ENCODE measurements at regions of chr3 and their contacts with region 1.

Region 1: DNA sequence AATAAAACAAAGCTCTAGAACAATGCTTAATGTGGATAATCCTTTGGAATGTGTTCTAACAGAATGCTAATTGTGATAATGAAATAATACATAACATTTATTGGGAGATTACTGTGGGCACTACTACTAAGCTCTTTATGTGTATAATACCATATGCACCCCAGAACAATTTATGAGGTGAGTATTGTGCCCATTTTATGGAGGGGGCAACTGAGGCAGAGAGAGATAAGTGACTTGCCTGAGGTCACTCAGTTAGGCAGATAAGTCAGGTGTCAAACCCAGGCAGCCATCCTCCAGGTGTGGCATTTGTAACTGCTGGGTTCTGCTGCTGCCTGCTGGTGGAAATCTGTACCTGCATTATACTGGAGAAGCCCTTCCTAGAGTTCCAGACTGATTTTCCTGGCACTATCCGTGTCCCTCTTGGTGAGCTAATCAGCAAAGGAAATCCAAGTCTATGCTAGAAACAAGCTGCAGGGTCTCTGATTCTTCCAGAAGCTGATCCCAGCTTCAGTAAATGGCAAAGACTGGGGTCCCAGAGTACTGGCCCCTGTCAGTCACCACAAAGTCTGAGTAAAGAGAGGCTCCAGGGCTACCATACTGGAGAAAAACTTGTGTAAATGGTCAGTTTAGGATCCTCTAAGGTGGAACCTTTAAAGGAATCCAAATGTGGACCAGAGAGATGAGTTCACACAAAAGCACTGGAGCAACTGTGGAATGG is 22.6 kb upstream of the RBP1 start:
- H3K4me3 ChIP-seq: no peak overlapping the region
- H3K27ac ChIP-seq: no peak overlapping the region
- H3K4me1 ChIP-seq: no peaks in the 10 kb centered on the region
- CTCF ChIP-seq: peak; percentile 49; the same call in 1 of the 2 replicates

Region 2: DNA sequence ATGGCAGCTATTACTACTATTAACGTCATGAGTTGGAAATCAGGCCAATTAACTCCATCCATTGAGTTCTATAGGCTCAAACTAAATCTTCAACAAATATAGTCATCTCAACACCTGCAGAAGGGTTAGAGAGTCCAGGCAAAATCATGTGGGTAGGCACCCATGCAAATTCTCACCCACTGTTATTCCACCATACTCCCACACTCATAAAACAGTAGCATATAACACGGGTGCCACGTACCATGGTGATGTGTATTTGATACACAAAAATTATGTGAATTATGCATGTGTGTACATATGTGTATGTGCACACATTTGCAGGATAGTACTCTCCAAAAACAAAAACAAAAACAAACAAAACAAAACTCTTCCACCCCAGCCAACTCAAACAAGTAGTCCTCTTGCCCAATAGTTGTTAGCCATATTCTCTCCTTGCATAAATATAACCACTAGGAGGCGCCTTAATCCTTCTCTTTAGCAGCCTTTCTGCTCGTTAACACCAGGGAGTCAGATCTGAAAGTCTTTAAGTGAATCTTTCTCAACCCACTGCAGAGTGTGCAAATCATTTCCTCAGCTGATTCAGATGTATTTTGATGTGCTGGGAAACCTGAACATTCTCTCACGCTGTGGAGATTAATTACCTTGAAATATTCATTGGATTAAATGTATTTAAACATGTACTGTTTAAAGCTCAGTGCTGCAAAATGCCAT is 134.7 kb before region 1 on chr3:
- CTCF ChIA-PET with region 1: interaction called, 89 read pairs
- POLR2A ChIA-PET with region 1: no interaction called
- H3K4me3 ChIP-seq: no peak overlapping the region
- H3K27ac ChIP-seq: no peak overlapping the region
- H3K4me1 ChIP-seq: no peaks in the 10 kb centered on the region
- CTCF ChIP-seq: peak; percentile 59; the same call in 1 of the 2 replicates

Region 3: DNA sequence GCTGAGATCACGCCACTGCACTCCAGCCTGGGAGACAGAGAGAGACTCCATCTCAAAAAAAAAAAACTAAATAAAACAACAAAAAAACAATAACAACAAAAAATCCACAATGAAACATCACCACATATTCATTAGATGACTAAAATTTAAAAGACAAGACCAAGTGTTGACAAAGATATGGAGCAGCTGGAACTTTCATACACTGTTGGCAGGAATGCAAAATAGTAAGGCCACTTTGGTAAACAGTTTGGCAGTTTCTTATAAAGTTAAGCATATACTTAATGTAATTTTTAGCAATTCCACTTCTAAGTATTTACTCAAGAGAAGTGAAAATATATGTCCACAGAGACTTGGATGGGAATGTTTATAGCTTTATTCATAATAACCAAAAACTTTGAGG is 129.0 kb before region 1 on chr3:
- CTCF ChIA-PET with region 1: interaction called, 89 read pairs
- POLR2A ChIA-PET with region 1: no interaction called
- H3K4me3 ChIP-seq: no peak overlapping the region
- H3K27ac ChIP-seq: no peak overlapping the region
- H3K4me1 ChIP-seq: no peaks in the 10 kb centered on the region
- CTCF ChIP-seq: no peak

Region 4: DNA sequence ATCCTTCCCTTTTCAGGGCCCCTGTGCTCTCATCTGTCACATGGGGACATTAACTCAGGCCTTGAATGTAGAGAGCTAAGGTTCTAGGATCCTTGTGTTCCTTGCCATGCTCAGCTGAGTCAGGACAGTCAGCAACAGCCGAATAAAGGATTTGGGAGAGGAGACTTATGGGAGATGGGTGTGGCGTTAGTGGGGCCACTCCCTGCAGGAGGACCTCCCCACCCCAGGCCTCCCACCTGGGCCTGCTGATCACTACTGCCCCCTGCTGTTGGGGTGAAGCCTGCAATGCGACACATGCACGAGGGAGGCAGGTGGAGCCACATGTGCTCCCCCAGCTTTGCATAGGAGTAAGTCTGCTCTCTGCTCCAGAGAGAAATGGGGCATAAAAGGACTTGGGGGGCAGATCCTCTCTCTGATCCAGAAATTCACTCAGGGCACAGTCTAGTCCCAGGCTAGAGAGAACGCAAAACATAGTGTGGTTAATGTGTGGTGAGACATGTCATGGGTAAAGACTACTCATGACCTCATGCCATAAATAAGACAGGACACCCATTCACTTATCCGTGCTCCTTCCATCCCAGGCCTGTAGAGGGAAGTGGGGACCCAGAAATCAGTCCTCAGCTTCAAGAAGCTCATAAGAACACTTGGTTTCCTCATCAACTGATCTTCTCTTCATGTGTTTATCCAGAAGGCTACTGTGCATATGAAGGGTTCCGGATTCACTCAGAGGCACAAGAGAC is 42.0 kb before region 1 on chr3:
- CTCF ChIA-PET with region 1: interaction called, 12 read pairs
- POLR2A ChIA-PET with region 1: no interaction called
- H3K4me3 ChIP-seq: no peak overlapping the region
- H3K27ac ChIP-seq: no peak overlapping the region
- H3K4me1 ChIP-seq: no peaks in the 10 kb centered on the region
- CTCF ChIP-seq: peak; percentile 24

Region 5: DNA sequence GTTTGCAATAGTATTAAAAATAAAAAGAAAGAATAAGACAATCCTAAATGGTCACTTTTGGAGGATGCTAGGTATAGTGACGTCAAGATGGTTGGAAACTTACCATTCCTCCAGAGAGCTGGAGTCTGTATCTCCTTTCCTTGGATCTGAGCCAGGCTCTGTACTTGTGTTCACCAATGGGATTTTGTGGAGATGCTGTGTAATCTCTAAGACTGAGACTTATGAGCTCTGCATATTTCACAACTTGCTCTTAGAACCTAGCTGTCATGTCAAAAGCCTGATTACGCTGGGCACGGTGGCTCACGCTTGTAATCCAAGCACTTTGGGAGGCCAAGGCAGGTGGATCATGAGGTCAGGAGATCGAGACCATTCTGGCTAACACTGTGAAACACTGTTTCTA is 246.1 kb after region 1 on chr3:
- CTCF ChIA-PET with region 1: no interaction called
- POLR2A ChIA-PET with region 1: no interaction called
- H3K4me3 ChIP-seq: no peak overlapping the region
- H3K27ac ChIP-seq: no peak overlapping the region
- H3K4me1 ChIP-seq: no peaks in the 10 kb centered on the region
- CTCF ChIP-seq: no peak

Region 6: DNA sequence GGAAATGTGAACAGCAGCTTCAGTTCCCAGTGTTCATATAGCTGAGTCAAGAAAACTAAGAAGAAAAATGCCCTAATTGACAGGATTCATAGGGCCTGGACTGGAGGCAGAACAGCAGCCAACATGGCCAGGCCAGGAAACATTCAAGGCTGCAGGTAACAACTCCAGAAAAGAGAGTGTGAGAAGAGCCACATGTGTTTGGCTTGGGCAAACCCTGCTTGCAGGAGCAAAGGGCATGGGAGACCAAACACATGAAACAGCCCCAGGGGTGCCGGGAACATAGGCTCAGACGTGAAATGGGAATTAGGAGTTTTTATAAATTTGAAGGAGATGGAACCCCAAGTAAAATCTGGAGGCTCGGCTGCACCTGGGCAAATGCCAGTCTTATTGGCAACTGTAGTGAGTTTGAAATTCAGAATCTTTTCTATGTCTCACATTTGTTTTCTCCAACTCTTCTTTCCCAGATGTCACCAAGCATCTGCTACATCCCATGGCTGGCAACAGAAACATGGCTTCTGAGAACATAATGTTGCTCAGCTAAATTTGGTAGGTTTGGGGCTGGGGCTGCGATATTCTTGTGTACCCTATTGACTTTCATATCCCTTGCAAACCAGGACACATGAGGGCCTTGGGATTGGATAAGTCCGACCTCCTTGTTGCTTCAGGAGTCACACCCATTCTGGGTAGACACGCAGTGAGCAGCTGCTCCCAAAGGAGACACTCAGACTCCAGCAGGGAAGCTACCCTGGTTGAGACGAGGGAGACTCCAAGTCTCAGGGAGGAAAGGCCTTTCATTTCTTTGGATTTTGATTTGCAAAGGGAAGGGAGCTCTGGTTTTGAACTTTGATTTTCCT is 273.9 kb after region 1 on chr3:
- CTCF ChIA-PET with region 1: no interaction called
- POLR2A ChIA-PET with region 1: no interaction called
- H3K4me3 ChIP-seq: no peak overlapping the region
- H3K27ac ChIP-seq: no peak overlapping the region
- H3K4me1 ChIP-seq: no peaks in the 10 kb centered on the region
- CTCF ChIP-seq: no peak